ENCODE measurements at regions of chr3 and their contacts with region 1.

Region 1: DNA sequence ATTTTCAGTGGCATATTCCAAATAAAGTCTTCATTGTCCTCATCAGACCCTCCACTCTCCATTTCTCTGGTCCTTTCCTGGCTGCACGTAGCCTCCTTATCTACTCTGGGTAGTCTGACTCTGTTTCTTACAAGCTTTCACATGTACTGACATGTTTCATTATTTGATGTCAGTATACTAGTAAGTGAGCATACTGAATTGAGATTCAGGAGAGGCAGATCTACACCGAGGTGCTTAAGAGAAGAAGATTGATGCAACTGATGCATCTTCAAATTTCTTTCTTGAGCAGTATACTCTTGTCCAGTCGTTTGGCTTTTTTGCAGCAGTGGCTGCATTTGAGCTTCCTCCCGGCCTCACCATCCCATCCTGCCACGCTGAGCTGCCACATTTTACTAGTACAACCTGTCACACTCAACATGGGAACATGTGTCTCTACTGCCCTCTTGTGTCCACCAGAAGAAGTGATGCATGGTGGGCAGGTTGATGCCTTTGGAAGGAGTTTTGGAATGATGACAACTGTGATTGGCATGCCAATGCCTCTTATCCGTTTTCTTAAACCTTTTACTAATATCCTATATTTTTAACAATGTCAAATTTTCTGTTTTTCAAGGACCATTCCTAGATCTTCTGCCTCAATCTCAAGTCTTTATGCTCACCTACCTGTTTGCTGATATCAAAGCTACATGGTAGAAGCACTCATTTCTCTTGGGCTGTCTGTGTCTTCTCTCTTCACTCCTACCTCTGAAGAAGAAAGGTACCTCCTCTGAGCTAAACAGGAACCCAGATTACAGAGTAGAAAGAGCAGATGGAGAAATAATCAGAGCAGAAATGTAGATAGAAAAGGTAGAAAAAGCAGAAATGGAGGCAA is 38.7 kb downstream of the GUCA1C start:
- DNase-seq: peak; percentile 72
- H3K4me3 ChIP-seq: no peak overlapping the region; a peak in 1 of 4 replicates
- H3K27ac ChIP-seq: no peak overlapping the region
- H3K4me1 ChIP-seq: 0 out of 4 replicates have a peak, but pooled peaks cover 0 to 4% of the 10 kb centered on the region in 2 experiments
- H3K27me3 ChIP-seq: no peaks in the 10 kb centered on the region
- CTCF ChIP-seq: peak; percentile 91
- EP300 ChIP-seq: no peak
- RAD21 ChIP-seq: peak; percentile 94

Region 2: DNA sequence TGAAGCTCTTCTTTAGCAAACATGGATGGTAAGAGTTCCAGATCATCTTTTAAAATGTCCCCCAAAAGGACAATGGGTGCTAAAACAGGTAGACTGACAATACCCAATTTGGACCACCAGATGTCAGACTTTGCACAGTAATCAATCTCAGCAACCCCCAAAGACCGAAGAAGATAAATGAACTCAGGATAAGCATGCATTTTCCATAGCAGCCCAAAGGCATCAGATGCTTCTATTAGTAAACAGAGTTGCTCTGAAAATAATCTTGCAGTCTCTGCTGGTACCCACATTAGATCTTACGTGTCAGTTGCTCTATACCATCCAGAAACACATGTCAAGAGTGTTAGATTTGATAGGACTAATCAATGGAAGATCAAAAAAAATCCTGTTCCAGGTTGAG is 425.2 kb before region 1 on chr3:
- CTCF ChIA-PET with region 1: interaction called, 17 read pairs
- POLR2A ChIA-PET with region 1: no interaction called
- DNase-seq: peak; percentile 45
- H3K4me3 ChIP-seq: no peak overlapping the region; a peak in 1 of 4 replicates
- H3K27ac ChIP-seq: no peak overlapping the region
- H3K4me1 ChIP-seq: peaks cover 18 to 29% of the 10 kb centered on the region in 2 experiments
- H3K27me3 ChIP-seq: no peaks in the 10 kb centered on the region
- CTCF ChIP-seq: peak; percentile 78
- EP300 ChIP-seq: no peak
- RAD21 ChIP-seq: peak; percentile 97

Region 3: DNA sequence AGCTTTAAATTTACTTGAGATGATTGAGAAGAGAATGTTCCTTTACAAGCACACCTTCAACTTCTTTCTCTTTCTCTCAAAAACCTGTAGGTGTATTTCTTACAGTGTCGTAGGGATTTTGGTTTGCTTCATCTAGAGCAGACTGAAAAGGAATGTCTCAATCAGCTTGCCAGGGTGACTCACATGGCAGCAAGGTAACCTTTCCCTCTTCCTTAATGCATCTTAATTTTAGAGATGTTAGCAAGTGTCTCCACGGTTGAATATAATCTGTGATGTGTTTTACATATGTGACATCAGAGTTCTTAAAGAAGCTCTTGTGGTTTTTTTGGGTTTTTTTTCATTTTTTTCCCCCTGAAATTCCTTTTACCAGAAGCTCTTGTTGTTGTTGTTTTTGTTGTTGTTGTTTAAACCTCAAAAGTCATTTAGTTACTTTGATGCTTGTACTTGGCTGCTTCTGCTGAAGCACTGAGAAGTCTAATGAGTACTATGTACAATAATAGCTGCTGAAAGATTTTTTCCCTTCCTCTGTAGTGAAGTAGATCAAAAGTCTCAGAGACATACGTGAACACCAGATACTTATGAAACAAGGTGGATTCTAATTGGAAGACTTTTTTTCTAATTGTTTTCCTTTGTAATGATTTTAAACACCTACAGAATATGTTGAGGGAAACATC is 240.9 kb before region 1 on chr3:
- CTCF ChIA-PET with region 1: interaction called, 199 read pairs
- POLR2A ChIA-PET with region 1: no interaction called
- DNase-seq: no peak
- H3K4me3 ChIP-seq: no peak overlapping the region
- H3K27ac ChIP-seq: no peak overlapping the region
- H3K4me1 ChIP-seq: no peaks in the 10 kb centered on the region; a peak in 1 of 4 replicates
- H3K27me3 ChIP-seq: no peaks in the 10 kb centered on the region
- CTCF ChIP-seq: no peak
- EP300 ChIP-seq: no peak
- RAD21 ChIP-seq: no peak

Region 4: DNA sequence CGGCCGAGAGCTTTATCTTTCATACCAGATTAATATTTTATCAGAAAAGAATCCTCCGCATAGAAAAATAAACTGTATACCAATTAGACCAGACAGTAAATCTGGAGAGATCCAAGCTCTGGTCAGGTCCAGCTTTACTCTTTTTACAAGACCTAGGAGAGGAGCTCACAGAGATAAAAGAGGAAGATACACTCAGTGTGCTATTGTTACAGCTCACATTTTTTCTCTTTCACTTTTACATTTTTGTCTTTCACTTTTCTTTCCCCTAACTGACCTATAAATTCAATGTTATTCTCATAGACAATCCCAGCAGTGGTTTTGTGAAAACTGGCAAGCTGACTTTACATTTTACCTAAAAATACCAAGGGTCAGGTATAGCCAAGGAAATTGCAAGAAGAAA is 17.1 kb before region 1 on chr3:
- CTCF ChIA-PET with region 1: interaction called, 42 read pairs
- POLR2A ChIA-PET with region 1: no interaction called
- DNase-seq: no peak
- H3K4me3 ChIP-seq: no peak overlapping the region
- H3K27ac ChIP-seq: no peak overlapping the region
- H3K4me1 ChIP-seq: no peaks in the 10 kb centered on the region; a peak in 1 of 4 replicates
- H3K27me3 ChIP-seq: no peaks in the 10 kb centered on the region
- CTCF ChIP-seq: no peak
- EP300 ChIP-seq: no peak
- RAD21 ChIP-seq: no peak

Region 5: GRCh38 chr3:108936924-108937689 is 22.1 kb after region 1 on chr3:
- CTCF ChIA-PET with region 1: interaction called, 15 read pairs
- POLR2A ChIA-PET with region 1: no interaction called
- DNase-seq: peak; percentile 34
- H3K4me3 ChIP-seq: no peak overlapping the region
- H3K27ac ChIP-seq: no peak overlapping the region
- H3K4me1 ChIP-seq: peaks cover 0 to 6% of the 10 kb centered on the region in 2 experiments; a peak in 1 of 4 replicates
- H3K27me3 ChIP-seq: no peaks in the 10 kb centered on the region
- CTCF ChIP-seq: no peak
- EP300 ChIP-seq: no peak
- RAD21 ChIP-seq: no peak